Activated CD4-positive, alpha-beta T cell treated with anti-CD3 and anti-CD28 coated beads for 36 hours (primary cell): ENCODE measurements at regions of chr6 and their contacts with region 1.

Region 1: GRCh38 chr6:144597511-144597910 is 312.4 kb downstream of the UTRN start:
- DNase-seq: peak; percentile 20
- ATAC-seq: peak; percentile 92
- H3K4me3 Mint-ChIP-seq: no peak overlapping the region
- H3K27ac Mint-ChIP-seq: no peak overlapping the region
- H3K4me1 Mint-ChIP-seq: peaks cover 38% of the 10 kb centered on the region
- H3K27me3 Mint-ChIP-seq: no peaks in the 10 kb centered on the region

Region 2: DNA sequence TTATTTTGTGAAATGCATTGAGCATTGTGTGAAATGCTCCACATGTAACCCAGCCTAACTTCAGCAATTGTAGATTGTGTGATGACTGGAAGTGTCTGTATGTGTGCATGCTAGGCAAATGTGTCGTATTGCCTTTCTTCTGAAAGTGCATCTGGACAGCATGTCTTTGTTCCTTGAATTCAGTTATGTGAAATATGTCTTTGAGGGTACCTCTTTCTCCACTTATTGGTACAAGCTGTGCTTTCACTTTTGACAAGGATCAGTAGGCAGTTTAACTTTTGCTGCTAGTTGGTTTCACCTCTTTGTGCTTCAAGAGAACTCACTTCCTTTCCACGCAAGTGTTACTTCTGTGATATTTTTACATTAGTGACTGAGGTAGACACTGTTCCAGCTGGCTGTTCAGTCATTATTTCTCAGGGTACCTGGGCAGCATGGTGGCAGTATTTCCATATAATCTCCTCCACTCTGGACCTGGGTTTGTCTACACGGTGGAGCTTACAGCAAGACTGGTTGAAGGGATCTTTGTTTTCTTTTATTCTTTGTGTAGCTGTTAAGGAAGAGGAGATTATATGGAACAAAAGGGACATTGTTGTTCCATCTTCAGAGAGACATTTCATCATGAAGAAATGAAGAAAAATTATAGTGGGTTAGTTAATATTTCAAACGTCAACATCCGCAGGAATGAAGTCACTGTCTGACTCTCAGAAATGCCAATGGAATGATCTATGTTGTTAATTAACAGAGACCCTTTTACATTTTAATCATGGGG is 137.0 kb before region 1 on chr6:
- CTCF ChIA-PET with region 1: no interaction called
- POLR2A ChIA-PET with region 1: no interaction called
- intact Hi-C with region 1: no loop called
- DNase-seq: no peak
- ATAC-seq: peak; percentile 92
- H3K4me3 Mint-ChIP-seq: peak overlapping the region; percentile 40
- H3K27ac Mint-ChIP-seq: peak overlapping the region; percentile 78
- H3K4me1 Mint-ChIP-seq: peaks cover 17% of the 10 kb centered on the region
- H3K27me3 Mint-ChIP-seq: no peaks in the 10 kb centered on the region

Region 3: GRCh38 chr6:144544266-144544830 is 53.2 kb before region 1 on chr6:
- CTCF ChIA-PET with region 1: no interaction called
- POLR2A ChIA-PET with region 1: no interaction called
- intact Hi-C with region 1: loop called in 1 of 2 experiments (anchors 1 kb)
- DNase-seq: peak; percentile 31
- ATAC-seq: peak; percentile 99
- H3K4me3 Mint-ChIP-seq: no peak overlapping the region
- H3K27ac Mint-ChIP-seq: peak overlapping the region; percentile 2
- H3K4me1 Mint-ChIP-seq: peaks cover 20% of the 10 kb centered on the region
- H3K27me3 Mint-ChIP-seq: no peaks in the 10 kb centered on the region

Region 4: DNA sequence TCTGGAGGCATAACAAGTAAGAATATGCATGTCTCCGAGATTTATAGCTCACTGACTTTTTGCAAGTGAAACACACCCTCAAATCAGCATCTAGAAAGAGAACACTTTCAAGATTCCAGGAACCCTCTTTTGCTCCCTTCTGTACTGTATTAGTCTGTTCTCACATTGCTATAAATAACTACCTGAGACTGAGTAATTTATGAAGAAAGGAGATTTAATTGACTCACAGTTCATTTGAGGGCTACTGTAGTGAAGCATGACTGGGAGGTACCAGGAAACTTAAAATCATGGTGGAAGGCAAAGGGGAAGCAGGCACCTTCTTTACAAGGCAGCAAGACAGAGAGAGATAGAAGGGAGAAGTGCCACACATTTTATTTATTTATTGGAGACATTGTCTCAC is 42.4 kb before region 1 on chr6:
- CTCF ChIA-PET with region 1: no interaction called
- POLR2A ChIA-PET with region 1: no interaction called
- intact Hi-C with region 1: loop called in 1 of 2 experiments (anchors 1 kb)
- DNase-seq: no peak
- ATAC-seq: peak; percentile 87
- H3K4me3 Mint-ChIP-seq: no peak overlapping the region
- H3K27ac Mint-ChIP-seq: peak overlapping the region; percentile 67
- H3K4me1 Mint-ChIP-seq: peaks cover 17% of the 10 kb centered on the region
- H3K27me3 Mint-ChIP-seq: no peaks in the 10 kb centered on the region

Region 5: GRCh38 chr6:144653885-144654505 is 56.5 kb after region 1 on chr6:
- CTCF ChIA-PET with region 1: interaction called, 5 read pairs
- POLR2A ChIA-PET with region 1: no interaction called
- intact Hi-C with region 1: loop called (anchors 2 to 5 kb)
- DNase-seq: no peak
- ATAC-seq: peak; percentile 79
- H3K4me3 Mint-ChIP-seq: no peak overlapping the region
- H3K27ac Mint-ChIP-seq: peak overlapping the region; percentile 39
- H3K4me1 Mint-ChIP-seq: peaks cover 42% of the 10 kb centered on the region
- H3K27me3 Mint-ChIP-seq: no peaks in the 10 kb centered on the region

Region 6: GRCh38 chr6:145067430-145067829 is 469.9 kb after region 1 on chr6:
- CTCF ChIA-PET with region 1: no interaction called
- POLR2A ChIA-PET with region 1: no interaction called
- intact Hi-C with region 1: no loop called
- DNase-seq: no peak
- ATAC-seq: no peak
- H3K4me3 Mint-ChIP-seq: no peak overlapping the region
- H3K27ac Mint-ChIP-seq: no peak overlapping the region
- H3K4me1 Mint-ChIP-seq: no peaks in the 10 kb centered on the region
- H3K27me3 Mint-ChIP-seq: peaks cover 15% of the 10 kb centered on the region